HCT116 (cell line): ENCODE measurements at regions of chr2 and their contacts with region 1.

Region 1: DNA sequence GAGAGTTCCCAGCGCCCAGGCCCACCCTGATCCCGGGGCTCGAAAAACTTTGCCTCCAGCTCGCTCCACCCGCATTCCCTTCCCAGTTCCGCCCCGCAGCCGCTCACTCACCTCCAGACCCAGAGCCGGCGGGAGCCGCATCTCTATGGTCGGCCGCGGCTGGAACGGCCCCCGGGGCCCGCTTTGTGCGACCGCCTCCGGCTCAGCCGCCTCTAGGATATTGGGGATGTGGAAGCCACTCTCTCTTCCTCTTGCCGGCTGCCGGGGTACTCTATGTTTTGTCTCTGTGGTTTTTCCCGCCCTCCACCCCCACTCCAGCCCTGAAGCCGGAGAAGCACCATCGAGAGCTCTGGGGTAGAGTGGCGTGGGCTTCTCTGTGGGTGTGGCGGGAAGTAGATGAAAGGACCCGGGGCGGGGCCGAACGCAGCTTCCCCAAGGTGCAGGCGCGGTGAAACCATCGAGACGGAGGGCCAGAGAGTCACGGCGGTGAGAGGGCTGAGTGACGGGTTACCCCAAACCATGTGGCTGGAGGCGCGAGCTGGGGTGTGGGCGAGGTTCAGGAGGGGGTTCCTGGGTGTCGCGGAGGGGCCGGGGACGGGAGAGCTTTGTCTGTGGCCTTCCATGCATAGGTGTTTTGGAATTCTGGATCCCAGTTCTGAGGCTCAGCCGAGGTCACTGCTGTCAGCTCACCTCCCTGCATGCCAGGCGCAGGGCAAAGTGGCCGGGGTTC is at the starts of genes BCS1L and ZNF142:
- DNase-seq: peak; percentile 81
- ATAC-seq: peak; percentile 89
- H3K4me3 ChIP-seq: peak within 1 kb of the TSS; percentile 88 to 96
- H3K27ac ChIP-seq: peak within 1 kb of the TSS; percentile 70
- H3K4me1 ChIP-seq: peaks cover 0 to 19% of the 10 kb centered on the region in 2 experiments; a peak in 2 of 4 replicates
- H3K27me3 ChIP-seq: no peaks in the 10 kb centered on the region
- CTCF ChIP-seq: no peak
- POLR2A ChIP-seq: peak; percentile 57
- RAD21 ChIP-seq: no peak
- total RNA-seq, gene BCS1L: 57.4 TPM
- total RNA-seq, gene ZNF142: 29.2 TPM

Region 2: GRCh38 chr2:218671654-218672566 is 12.5 kb after region 1 on chr2 and contains the starts of genes RNF25 and STK36:
- CTCF ChIA-PET with region 1: interaction called, 11 read pairs
- POLR2A ChIA-PET with region 1: interaction called, 20 read pairs
- RAD21 ChIA-PET with region 1: interaction called in 1 of 2 experiments, 5 read pairs
- intact Hi-C with region 1: no loop called
- DNase-seq: peak; percentile 78
- ATAC-seq: peak; percentile 96
- H3K4me3 ChIP-seq: peak within 1 kb of the TSS; percentile 74 to 89
- H3K27ac ChIP-seq: peak within 1 kb of the TSS; percentile 74
- H3K4me1 ChIP-seq: peaks cover 11 to 13% of the 10 kb centered on the region in 2 experiments; a peak in 2 of 4 replicates
- H3K27me3 ChIP-seq: no peaks in the 10 kb centered on the region
- CTCF ChIP-seq: no peak
- POLR2A ChIP-seq: peak; percentile 44
- RAD21 ChIP-seq: no peak
- total RNA-seq, gene RNF25: 23.4 TPM
- total RNA-seq, gene STK36: 45.5 TPM

Region 3: DNA sequence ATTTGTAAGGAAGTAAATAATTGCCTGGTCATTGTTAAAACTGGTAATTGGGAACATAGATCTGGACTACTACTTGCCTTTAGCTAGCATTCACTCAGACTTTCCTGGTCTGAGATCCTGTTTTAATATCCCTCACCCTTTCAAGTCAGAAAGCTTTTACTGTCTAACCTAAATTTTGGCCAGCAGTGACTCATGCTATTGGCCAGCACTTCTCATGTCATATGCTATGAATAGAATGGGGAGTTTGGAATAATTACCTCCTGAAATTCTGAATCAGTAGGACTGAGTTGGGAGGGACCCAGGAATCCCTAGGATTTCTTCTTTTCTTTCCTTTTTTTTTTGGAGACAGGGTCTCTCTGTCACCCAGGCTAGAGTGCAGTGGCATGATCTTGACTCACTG is 31.8 kb after region 1 on chr2:
- CTCF ChIA-PET with region 1: interaction called, 20 read pairs
- POLR2A ChIA-PET with region 1: no interaction called
- RAD21 ChIA-PET with region 1: interaction called, 3 to 7 read pairs
- intact Hi-C with region 1: loop called (anchors 1 kb)
- DNase-seq: no peak
- ATAC-seq: no peak
- H3K4me3 ChIP-seq: no peak overlapping the region
- H3K27ac ChIP-seq: no peak overlapping the region
- H3K4me1 ChIP-seq: no peaks in the 10 kb centered on the region
- H3K27me3 ChIP-seq: no peaks in the 10 kb centered on the region
- CTCF ChIP-seq: no peak
- POLR2A ChIP-seq: no peak
- RAD21 ChIP-seq: no peak

Region 4: GRCh38 chr2:218944759-218945404 is 285.5 kb after region 1 on chr2:
- CTCF ChIA-PET with region 1: no interaction called
- POLR2A ChIA-PET with region 1: no interaction called
- RAD21 ChIA-PET with region 1: no interaction called
- intact Hi-C with region 1: no loop called
- DNase-seq: no peak
- ATAC-seq: no peak
- H3K4me3 ChIP-seq: no peak overlapping the region
- H3K27ac ChIP-seq: no peak overlapping the region
- H3K4me1 ChIP-seq: no peaks in the 10 kb centered on the region
- H3K27me3 ChIP-seq: no peaks in the 10 kb centered on the region
- CTCF ChIP-seq: no peak
- POLR2A ChIP-seq: no peak
- RAD21 ChIP-seq: no peak